AG04449 (cell line): ENCODE measurements at regions of chr10 and their contacts with region 1.

Region 1: DNA sequence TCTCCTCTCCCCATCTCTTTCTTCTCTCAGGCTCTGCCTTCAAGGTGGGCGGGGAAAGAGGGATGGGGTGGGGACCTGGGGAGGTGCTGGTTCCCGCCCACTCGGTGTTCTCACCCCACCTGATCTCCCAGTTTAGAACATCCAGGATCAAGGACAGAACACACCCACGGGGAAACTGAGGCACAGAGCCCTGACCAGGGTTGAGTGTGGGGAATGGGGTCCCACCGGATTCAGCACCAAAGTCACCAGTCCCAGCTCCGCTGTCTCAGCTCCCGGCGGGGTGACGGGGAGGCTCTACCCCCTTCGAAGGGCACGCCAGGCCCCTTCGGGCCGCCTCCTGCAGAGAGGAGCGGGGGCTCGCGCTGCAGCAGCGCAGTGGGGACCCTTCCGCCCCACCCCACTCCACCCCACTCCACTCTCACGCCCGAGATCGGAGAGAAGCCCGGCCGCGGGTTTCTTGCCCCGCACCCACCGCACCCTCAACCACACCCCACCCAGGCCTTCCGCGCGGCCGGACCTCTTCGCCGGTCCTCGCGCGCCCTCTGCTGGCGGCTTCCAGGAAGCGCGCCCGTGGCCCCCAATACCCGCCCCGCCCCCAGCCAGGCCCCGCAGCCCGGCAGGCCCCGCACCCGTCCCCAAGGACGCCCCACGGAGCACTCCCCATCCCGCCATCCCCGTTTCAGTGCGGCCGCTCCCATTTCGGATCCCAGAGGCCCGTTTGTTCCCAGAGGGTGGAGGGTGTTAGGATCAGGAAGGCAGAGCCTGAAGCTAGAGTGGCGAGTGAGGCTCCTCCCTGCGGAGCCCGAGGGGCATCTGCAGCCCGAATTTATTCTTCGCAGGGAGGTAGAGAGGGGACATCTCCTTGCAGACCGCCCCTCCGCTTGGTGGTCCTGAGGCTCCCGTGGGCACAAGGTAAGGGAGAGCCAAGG is 18.0 kb downstream of the POLL start:
- DNase-seq: no peak
- H3K4me3 ChIP-seq: peak overlapping the region; percentile 72
- CTCF ChIP-seq: peak; percentile 92

Region 2: GRCh38 chr10:101161494-101162299 is 408.4 kb before region 1 on chr10:
- CTCF ChIA-PET with region 1: interaction called, 11 read pairs
- POLR2A ChIA-PET with region 1: no interaction called
- DNase-seq: no peak
- H3K4me3 ChIP-seq: peak overlapping the region; percentile 51
- CTCF ChIP-seq: peak; percentile 94

Region 3: GRCh38 chr10:101291331-101292193 is 278.5 kb before region 1 on chr10:
- CTCF ChIA-PET with region 1: interaction called, 12 read pairs
- POLR2A ChIA-PET with region 1: no interaction called
- DNase-seq: no peak
- H3K4me3 ChIP-seq: peak overlapping the region; percentile 50
- CTCF ChIP-seq: peak; percentile 68

Region 4: GRCh38 chr10:101552442-101552841 is 17.7 kb before region 1 on chr10:
- CTCF ChIA-PET with region 1: interaction called, 73 read pairs
- POLR2A ChIA-PET with region 1: no interaction called
- DNase-seq: no peak
- H3K4me3 ChIP-seq: no peak overlapping the region
- CTCF ChIP-seq: no peak

Region 5: DNA sequence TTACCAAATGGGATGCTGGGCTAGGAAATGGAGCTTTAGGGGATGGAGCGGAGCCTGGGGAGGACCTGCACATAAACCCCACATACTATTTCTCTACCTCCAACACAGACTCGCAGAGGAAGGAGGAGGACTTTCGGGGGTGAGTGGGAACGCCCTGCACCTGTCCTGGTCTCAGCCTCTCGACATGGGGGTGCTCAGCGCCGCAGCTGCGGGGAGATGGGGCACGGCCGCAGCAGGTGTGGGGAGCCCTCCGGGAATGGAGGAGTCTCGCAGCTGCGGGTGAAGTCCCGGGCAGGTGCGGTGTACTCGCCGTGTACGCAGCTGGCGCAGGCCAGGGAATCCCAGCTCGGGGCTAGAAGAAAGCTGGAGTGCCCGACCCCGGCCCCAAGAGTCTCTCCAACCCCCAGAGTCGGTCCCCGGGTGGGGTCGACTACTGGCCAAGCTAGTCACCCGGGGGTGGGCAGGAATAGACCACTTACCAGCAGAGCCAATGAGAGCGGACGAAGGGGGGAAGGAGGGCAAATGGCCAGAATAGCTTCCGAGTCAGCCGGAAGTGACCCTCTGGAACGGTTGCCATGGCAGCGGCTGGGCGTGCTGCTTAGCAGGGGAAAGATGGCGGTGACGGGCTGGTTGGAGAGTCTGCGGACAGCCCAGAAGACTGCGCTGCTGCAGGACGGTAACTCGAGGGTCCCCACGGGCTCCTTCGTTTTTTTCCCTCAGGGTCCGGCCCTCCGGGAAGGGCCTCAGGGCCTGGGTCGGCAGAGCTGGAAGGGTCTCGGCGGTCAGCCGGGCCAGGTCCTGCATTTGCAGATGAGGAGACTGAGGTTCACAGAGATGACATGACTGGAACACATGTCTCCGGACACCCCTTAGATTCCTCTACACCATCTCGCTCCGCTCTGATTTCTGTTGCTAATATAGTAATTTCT is 17.9 kb after region 1 on chr10 and contains the starts of genes DPCD and POLL:
- CTCF ChIA-PET with region 1: interaction called, 145 read pairs
- POLR2A ChIA-PET with region 1: no interaction called
- DNase-seq: peak; percentile 62
- H3K4me3 ChIP-seq: peak within 1 kb of the TSS; percentile 99
- CTCF ChIP-seq: no peak

Region 6: DNA sequence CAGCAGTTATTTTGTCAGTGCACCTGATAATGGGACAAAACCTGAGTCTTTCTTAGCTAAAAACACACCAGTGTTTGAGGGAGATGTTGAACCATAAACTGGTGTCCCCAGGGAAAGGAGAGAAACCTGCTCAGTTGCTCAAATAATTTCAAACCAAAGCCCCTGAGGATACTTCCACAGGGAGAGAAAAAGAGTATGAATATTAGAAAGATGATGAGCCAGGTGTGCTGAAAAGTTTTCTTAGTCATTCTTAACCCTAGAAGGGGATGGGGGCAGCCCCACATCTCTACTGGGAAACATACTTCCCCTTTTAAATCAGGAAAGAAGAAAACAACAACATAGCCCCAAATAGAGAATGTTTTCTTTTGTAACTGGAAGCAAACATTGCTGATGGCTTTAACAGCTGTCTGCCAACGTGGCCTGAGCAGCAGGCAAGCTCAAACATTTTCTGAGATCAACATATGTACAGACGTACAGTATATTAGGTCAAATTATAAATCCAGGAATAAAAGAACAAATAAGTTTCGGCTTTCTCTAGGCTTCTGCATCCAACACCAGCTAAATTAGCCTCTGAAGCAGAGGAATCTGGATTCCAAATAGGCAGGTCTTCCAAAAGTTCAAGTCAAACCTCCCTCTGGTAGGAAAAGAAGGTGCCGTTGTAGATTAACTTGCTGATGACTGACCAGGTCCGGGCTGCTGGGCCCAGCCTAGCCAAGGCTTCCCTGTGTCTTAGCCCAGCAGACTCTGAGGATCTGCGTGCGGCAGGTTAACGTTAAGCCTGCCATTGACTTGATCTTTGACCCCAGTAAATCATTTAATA is 155.4 kb after region 1 on chr10:
- CTCF ChIA-PET with region 1: no interaction called
- POLR2A ChIA-PET with region 1: no interaction called
- DNase-seq: no peak
- H3K4me3 ChIP-seq: no peak overlapping the region
- CTCF ChIP-seq: no peak